Posterior vena cava (tissue), 2 donors: ENCODE measurements at regions of chr16 and their contacts with region 1.

Region 1: GRCh38 chr16:20774703-20775362 is 11.0 kb downstream of the ACSM3 start:
- DNase-seq: no peak

Region 2: GRCh38 chr16:20249211-20249610 is 525.6 kb before region 1 on chr16:
- intact Hi-C with region 1: loop called in 1 of 2 experiments (anchors 5 kb)
- DNase-seq: no peak

Region 3: GRCh38 chr16:20849587-20850390 is 75.0 kb after region 1 on chr16:
- intact Hi-C with region 1: no loop called
- DNase-seq: peak; percentile 89